SK-N-SH (cell line): ENCODE measurements at regions of chr18 and their contacts with region 1.

Region 1: GRCh38 chr18:12391618-12392165 is 14.7 kb upstream of the AFG3L2 start:
- DNase-seq: peak; percentile 79
- H3K4me3 ChIP-seq: no peak overlapping the region; a peak in 1 of 4 replicates
- H3K27ac ChIP-seq: no peak overlapping the region
- H3K4me1 ChIP-seq: no peaks in the 10 kb centered on the region
- H3K27me3 ChIP-seq: no peaks in the 10 kb centered on the region
- CTCF ChIP-seq: peak; percentile 98
- EP300 ChIP-seq: no peak
- RAD21 ChIP-seq: peak; percentile 99

Region 2: GRCh38 chr18:12408247-12408869 is 16.7 kb after region 1 on chr18:
- CTCF ChIA-PET with region 1: interaction called, 33 read pairs
- POLR2A ChIA-PET with region 1: no interaction called
- DNase-seq: peak; percentile 34
- H3K4me3 ChIP-seq: peak overlapping the region; percentile 56 to 78
- H3K27ac ChIP-seq: peak overlapping the region; percentile 73 to 76
- H3K4me1 ChIP-seq: peaks cover 11 to 15% of the 10 kb centered on the region in 2 experiments; a peak in 2 of 4 replicates
- H3K27me3 ChIP-seq: no peaks in the 10 kb centered on the region
- CTCF ChIP-seq: no peak
- EP300 ChIP-seq: no peak
- RAD21 ChIP-seq: no peak

Region 3: DNA sequence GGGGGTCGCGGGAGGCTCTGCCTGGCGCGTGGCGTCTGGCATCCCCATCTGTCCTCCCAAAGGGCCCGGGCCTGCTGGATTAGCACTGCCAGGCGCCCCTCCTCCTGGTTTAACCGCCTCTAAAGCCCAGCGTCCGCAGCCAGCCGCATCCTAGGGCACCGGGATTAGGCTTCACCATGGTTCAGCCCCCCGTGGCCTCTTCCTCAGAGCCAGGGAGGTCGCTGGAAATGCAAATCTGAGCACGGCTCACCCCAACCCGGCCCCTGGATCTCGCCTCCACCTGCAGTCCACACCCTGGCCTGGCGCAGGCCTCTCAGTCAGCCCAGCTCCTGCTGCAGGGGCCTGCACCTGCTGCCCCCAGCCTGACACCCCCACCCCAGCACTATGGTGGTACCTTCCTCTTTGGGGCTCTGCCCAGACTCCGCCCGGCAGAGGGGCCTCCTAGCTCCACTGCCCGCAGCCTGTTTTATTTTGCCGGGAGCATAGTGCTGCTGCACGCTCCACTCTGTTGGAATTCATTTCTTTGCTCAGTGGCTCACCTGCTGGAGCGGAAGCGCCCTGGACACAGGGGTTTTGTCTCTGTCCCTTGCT is 29.2 kb after region 1 on chr18:
- CTCF ChIA-PET with region 1: interaction called, 12 read pairs
- POLR2A ChIA-PET with region 1: no interaction called
- DNase-seq: peak; percentile 87
- H3K4me3 ChIP-seq: peak overlapping the region in 1 of 2 experiments; percentile 26; a peak in 1 of 4 replicates
- H3K27ac ChIP-seq: peak overlapping the region in 1 of 2 experiments; percentile 70; a peak in 2 of 4 replicates
- H3K4me1 ChIP-seq: peaks cover 0 to 7% of the 10 kb centered on the region in 2 experiments; a peak in 1 of 4 replicates
- H3K27me3 ChIP-seq: no peaks in the 10 kb centered on the region
- CTCF ChIP-seq: no peak
- EP300 ChIP-seq: no peak
- RAD21 ChIP-seq: no peak

Region 4: DNA sequence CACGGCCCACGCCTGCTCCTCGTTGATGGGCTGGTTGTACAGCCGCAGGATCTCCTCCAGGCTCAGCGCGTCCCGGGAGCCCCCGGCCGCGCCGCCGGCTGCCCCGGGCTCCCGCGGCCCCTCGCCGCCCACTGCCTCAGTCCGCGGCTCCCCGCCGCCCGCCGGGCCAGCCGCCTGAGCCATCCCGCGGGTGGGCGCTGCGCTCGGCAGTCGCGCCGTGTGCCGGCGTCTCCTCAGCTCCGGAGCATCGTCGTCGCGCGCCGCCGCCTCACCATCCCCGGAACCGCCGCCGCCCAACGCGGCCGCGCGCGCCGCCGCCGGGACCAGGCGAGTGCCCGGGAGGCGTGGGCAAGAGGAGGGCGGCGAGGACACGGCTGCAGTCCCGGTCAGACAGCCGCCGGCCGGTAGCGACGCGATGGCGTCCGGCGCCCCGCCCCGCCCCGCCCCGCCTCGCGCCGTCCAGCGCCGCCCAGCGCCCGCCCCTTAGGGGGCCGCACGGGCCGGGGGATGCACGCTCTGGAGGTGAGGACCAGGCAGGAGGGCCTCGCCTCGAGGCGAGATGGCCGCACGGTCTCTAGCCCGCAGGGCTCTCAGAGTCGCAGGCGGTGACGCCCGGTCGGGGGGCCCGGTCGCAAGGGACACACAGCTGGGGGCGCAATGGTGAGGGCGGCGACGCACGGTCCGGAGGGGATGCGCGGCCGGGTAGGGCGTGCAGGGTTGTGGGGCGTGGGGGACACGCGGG is 266.2 kb after region 1 on chr18 and contains the start of gene SPIRE1:
- CTCF ChIA-PET with region 1: interaction called, 83 read pairs
- POLR2A ChIA-PET with region 1: interaction called, 3 read pairs
- DNase-seq: peak; percentile 93
- H3K4me3 ChIP-seq: peak within 1 kb of the TSS; percentile 76 to 83
- H3K27ac ChIP-seq: peak within 1 kb of the TSS; percentile 77 to 82
- H3K4me1 ChIP-seq: peaks cover 12 to 21% of the 10 kb centered on the region in 2 experiments
- H3K27me3 ChIP-seq: no peaks in the 10 kb centered on the region
- CTCF ChIP-seq: no peak
- EP300 ChIP-seq: no peak
- RAD21 ChIP-seq: no peak
- polyA plus RNA-seq, gene SPIRE1: 6.7 and 8.4 TPM in 2 replicates

Region 5: DNA sequence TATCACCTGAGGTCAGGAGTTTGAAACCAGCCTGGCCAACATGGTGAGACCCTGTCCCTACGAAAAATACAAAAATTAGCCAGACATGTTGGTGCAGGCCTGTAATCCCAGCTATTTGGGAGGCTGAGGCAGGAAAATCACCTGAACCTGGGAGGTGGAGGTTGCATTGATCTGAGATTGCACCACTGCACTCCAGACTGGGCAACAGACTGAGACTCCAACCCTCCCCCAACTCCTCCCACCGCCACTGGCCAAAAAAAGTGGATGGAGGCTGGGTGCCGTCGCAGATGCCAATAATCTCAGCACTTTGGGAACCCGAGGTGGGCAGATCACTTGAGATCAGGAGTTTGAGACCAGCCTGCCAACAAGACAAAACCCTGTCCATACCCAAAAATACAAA is 276.3 kb after region 1 on chr18:
- CTCF ChIA-PET with region 1: interaction called, 28 read pairs
- POLR2A ChIA-PET with region 1: no interaction called
- DNase-seq: no peak
- H3K4me3 ChIP-seq: no peak overlapping the region
- H3K27ac ChIP-seq: no peak overlapping the region
- H3K4me1 ChIP-seq: no peaks in the 10 kb centered on the region
- H3K27me3 ChIP-seq: no peaks in the 10 kb centered on the region
- CTCF ChIP-seq: no peak
- EP300 ChIP-seq: no peak
- RAD21 ChIP-seq: no peak